ENCODE measurements at regions of chr1 and their contacts with region 1.

Region 1: GRCh38 chr1:223123011-223123610 is 19.9 kb downstream of the TLR5 start:
- DNase-seq: no peak
- H3K4me3 ChIP-seq: peak overlapping the region; percentile 25
- H3K27ac ChIP-seq: peak overlapping the region in 1 of 2 donors; percentile 54
- H3K4me1 ChIP-seq: peaks cover 2% of the 10 kb centered on the region
- H3K27me3 ChIP-seq: no peaks in the 10 kb centered on the region
- CTCF ChIP-seq: no peak
- EP300 ChIP-seq: no peak
- POLR2A ChIP-seq: no peak

Region 2: DNA sequence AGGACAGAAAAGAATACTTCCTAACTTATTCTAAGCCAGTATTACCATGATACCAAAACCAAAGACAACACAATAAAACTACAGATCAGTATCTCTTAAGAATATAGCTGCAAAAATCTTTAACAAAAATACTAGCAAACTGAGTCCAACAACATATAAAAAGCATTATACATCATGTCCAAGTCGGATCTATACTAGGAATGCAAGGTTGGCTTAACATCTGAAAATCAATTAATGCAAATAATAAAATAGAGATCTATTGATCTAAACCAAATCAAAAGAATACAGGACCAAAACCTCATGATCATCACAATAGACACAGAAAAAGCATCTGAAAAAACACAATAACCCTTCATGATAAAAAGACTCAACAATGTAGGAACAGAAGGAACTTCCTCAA is 552.3 kb before region 1 on chr1:
- intact Hi-C with region 1: no loop called
- DNase-seq: no peak
- H3K4me3 ChIP-seq: no peak overlapping the region
- H3K27ac ChIP-seq: no peak overlapping the region
- H3K4me1 ChIP-seq: no peaks in the 10 kb centered on the region
- H3K27me3 ChIP-seq: no peaks in the 10 kb centered on the region
- CTCF ChIP-seq: no peak
- EP300 ChIP-seq: no peak
- POLR2A ChIP-seq: no peak

Region 3: GRCh38 chr1:222814536-222815439 is 308.3 kb before region 1 on chr1 and contains the start of gene DISP1:
- intact Hi-C with region 1: no loop called
- DNase-seq: peak; percentile 83 to 91 (median 86)
- H3K4me3 ChIP-seq: peak within 1 kb of the TSS; percentile 73
- H3K27ac ChIP-seq: peak within 1 kb of the TSS; percentile 71 to 86
- H3K4me1 ChIP-seq: peaks cover 4% of the 10 kb centered on the region
- H3K27me3 ChIP-seq: no peaks in the 10 kb centered on the region
- CTCF ChIP-seq: no peak
- EP300 ChIP-seq: no peak
- POLR2A ChIP-seq: peak; percentile 37
- total RNA-seq, gene DISP1: 5.4 to 11.0 (median 6.7) TPM

Region 4: DNA sequence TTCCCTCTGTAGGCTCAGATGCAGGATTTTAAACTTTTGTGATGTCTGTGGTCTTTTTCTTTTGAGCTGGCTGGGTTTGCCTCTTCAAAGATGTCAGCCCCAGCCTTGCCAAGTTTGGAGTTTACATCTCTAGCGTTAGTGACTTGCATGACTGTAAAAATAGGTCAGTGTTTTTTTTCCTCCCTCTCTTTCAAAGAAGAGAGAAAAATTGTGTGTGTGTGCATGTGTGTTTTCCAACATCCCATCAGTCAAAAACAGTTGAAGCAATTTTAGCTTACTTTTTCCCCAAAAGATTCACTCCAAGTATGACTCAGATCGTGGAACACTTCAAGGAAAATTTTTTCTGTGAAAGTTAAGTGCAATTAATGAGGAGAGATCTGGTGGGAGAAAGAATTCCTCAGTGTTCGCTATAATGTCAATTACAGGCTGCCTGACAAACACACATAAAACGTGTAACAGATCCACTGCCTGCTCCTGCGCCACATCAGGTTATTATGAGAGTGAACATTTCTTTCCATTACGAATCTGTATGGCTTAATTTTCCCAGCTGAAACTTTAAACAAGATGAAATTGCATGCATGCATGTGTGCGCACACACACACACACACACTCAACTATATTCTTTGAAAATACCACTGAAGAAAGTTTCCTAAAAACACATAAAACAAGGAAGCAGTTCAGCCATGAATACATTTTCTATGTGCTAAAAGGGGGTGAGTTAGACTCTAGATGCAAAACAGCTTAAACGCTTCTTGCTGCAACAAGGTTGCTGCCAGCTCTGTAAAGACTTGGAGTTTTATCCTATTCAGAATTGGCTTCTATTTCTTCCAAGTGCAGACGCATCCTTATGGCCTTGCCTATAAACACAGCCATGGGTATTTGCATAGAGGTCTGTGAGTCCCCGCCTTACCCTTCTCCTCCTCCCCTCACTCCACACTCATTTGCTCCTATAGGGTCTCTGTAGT is 35.5 kb before region 1 on chr1:
- intact Hi-C with region 1: loop called in 1 of 4 experiments (anchors 5 kb)
- DNase-seq: peak in 1 of 5 donors; percentile 20
- H3K4me3 ChIP-seq: no peak overlapping the region
- H3K27ac ChIP-seq: peak overlapping the region in 1 of 2 donors; percentile 56
- H3K4me1 ChIP-seq: peaks cover 2% of the 10 kb centered on the region
- H3K27me3 ChIP-seq: no peaks in the 10 kb centered on the region
- CTCF ChIP-seq: no peak
- EP300 ChIP-seq: no peak
- POLR2A ChIP-seq: no peak

Region 5: DNA sequence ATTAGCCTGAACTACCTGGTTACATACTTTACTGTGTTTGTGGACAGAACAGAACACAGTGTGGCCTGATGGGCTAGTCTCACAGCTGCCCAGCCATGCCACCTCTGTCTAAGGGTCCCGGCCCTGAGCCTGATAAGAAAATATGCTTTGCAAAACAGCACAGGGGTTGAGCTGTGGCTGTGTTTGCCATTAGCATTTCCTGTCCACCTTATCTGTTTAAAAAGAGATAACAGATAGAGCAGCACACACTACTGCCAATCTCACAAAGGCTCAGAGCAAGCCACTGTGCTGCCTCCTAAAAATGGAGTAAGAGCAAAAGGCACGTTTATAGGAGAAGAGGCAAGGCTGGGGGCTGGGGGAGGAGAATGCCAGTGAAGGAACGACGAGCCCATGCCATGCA is 145.9 kb after region 1 on chr1:
- intact Hi-C with region 1: no loop called
- DNase-seq: no peak
- H3K4me3 ChIP-seq: no peak overlapping the region
- H3K27ac ChIP-seq: no peak overlapping the region
- H3K4me1 ChIP-seq: no peaks in the 10 kb centered on the region
- H3K27me3 ChIP-seq: no peaks in the 10 kb centered on the region
- CTCF ChIP-seq: no peak
- EP300 ChIP-seq: no peak
- POLR2A ChIP-seq: no peak